PC-9 (cell line): ENCODE measurements at regions of chr20 and their contacts with region 1.

Region 1: GRCh38 chr20:31712564-31713311 is 9.9 kb downstream of the BCL2L1 start:
- DNase-seq: peak; percentile 90 to 95
- H3K4me3 ChIP-seq: peak overlapping the region; percentile 47; the same call in 1 of the 2 replicates
- H3K27ac ChIP-seq: peak overlapping the region; percentile 99
- H3K4me1 ChIP-seq: peaks cover 97% of the 10 kb centered on the region
- H3K27me3 ChIP-seq: no peaks in the 10 kb centered on the region
- CTCF ChIP-seq: 0 out of 2 replicates have a peak, but pooled peaks have one; percentile 19

Region 2: DNA sequence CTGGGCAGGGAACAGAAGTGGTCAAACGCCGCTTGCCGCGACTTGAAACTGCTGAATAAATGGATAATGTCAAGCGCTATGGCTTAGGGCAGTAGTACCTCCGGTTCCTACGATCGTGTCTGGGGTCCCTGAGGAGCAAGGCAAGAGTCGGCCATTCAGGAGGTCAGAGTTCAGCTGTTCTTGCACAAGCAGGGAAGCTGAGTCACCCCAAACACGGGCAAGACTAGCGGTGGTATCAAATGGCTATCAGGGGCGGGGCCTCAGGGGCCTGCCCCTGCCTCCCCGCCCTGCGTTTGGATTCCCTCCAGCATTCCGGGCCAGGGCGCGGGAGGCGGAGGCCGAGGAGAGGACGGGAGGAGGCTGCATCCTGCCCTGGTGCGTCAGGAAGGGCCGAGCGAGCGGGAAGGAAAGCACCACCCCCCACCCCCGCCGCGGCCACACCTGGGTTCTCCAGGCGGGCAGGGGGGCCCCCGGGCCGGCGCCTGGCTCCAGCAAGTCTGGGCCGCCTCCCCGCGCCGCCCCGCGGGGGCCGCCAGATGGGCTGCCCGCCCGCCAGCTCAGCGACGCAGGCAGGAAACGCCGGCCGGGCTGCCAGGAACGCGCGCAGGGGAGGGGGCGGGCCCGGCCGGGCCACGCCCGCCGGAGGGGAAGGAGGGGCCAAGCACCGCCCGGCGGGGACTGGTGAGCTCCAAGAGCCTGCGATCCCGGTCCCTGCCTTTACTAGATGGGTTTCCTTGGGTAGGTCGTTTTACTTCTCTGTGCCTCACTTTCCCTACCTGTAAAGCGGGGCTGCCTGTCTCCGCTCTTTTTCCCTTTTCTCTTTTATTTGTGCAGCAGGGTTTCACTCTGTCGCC is 139.8 kb before region 1 on chr20:
- CTCF ChIA-PET with region 1: no interaction called
- POLR2A ChIA-PET with region 1: interaction called, 27 read pairs
- intact Hi-C with region 1: no loop called
- DNase-seq: peak; percentile 95 to 100
- H3K4me3 ChIP-seq: peak overlapping the region; percentile 64
- H3K27ac ChIP-seq: peak overlapping the region; percentile 96
- H3K4me1 ChIP-seq: peaks cover 46% of the 10 kb centered on the region
- H3K27me3 ChIP-seq: no peaks in the 10 kb centered on the region
- CTCF ChIP-seq: no peak

Region 3: DNA sequence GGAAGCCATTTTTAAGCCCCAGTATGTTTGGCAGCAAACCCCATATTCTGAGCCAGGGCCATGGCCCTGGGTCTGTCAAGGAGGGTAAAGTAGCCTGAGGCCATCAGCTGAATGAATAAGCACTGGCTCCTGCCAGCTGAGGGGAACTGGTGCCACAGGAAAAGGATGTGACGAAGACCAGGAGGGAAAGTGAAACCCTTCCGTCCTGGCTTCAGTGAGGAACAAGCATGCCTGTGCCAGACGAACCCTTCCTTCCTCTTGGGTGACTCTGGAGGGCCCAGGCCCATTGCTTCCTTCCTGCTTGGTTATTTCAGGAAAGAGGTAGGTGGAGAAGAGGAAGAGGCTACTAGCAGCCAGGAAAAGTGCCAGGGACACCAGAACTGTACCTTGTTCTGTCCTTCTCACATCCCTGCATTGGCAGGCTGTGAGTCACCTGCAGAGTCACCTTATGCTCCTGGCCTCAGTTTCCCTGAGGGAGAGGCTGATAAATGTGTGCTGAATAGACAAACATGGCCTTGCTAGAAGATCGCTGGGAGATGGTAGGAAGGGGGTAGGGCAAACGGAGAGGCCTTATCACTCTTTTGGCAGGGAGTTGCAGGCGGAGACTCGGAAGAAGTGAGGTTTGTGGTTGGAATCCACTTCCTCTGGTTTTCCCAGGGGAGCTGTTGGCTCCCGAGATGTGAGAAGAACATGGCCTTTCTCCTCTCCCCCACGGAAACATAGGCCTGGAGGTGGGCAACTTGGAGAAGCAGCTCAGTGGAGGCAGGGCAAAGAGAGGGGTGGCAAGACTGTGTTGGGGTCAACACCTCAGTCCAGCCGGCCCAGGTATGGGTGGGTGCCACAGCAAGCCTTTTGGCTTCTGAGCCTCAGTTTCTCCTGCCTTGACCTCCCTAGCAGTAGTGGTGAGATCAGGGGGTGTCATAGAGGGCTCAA is 37.6 kb before region 1 on chr20:
- CTCF ChIA-PET with region 1: interaction called, 4 read pairs
- POLR2A ChIA-PET with region 1: interaction called, 11 read pairs
- intact Hi-C with region 1: loop called (anchors 2 kb)
- DNase-seq: peak in 1 of 2 experiments; percentile 53
- H3K4me3 ChIP-seq: no peak overlapping the region
- H3K27ac ChIP-seq: peak overlapping the region; percentile 24; the same call in 1 of the 2 replicates
- H3K4me1 ChIP-seq: peaks cover 27% of the 10 kb centered on the region
- H3K27me3 ChIP-seq: no peaks in the 10 kb centered on the region
- CTCF ChIP-seq: no peak

Region 4: GRCh38 chr20:31698803-31699718 is 13.7 kb before region 1 on chr20:
- CTCF ChIA-PET with region 1: interaction called, 4 read pairs
- POLR2A ChIA-PET with region 1: interaction called, 37 read pairs
- intact Hi-C with region 1: loop called (anchors 1 kb)
- DNase-seq: peak; percentile 58 to 91
- H3K4me3 ChIP-seq: no peak overlapping the region
- H3K27ac ChIP-seq: peak overlapping the region; percentile 95
- H3K4me1 ChIP-seq: peaks cover 90% of the 10 kb centered on the region
- H3K27me3 ChIP-seq: no peaks in the 10 kb centered on the region
- CTCF ChIP-seq: no peak